Mammary epithelial cell (primary cell): ENCODE measurements at regions of chr2 and their contacts with region 1.

Region 1: GRCh38 chr2:36770542-36771287 is 74.2 kb downstream of the VIT start:
- DNase-seq: peak; percentile 47
- H3K4me3 ChIP-seq: no peak overlapping the region
- H3K27ac ChIP-seq: no peak overlapping the region
- H3K4me1 ChIP-seq: no peaks in the 10 kb centered on the region
- H3K27me3 ChIP-seq: no peaks in the 10 kb centered on the region
- CTCF ChIP-seq: peak; percentile 88 to 93

Region 2: GRCh38 chr2:36530178-36530982 is 240.3 kb before region 1 on chr2:
- CTCF ChIA-PET with region 1: no interaction called
- dilution Hi-C with region 1: no loop called
- in situ Hi-C with region 1: loop called in 1 of 2 experiments (anchors 10 kb)
- intact Hi-C with region 1: no loop called
- DNase-seq: no peak
- H3K4me3 ChIP-seq: no peak overlapping the region
- H3K27ac ChIP-seq: no peak overlapping the region
- H3K4me1 ChIP-seq: no peaks in the 10 kb centered on the region
- H3K27me3 ChIP-seq: no peaks in the 10 kb centered on the region
- CTCF ChIP-seq: no peak

Region 3: DNA sequence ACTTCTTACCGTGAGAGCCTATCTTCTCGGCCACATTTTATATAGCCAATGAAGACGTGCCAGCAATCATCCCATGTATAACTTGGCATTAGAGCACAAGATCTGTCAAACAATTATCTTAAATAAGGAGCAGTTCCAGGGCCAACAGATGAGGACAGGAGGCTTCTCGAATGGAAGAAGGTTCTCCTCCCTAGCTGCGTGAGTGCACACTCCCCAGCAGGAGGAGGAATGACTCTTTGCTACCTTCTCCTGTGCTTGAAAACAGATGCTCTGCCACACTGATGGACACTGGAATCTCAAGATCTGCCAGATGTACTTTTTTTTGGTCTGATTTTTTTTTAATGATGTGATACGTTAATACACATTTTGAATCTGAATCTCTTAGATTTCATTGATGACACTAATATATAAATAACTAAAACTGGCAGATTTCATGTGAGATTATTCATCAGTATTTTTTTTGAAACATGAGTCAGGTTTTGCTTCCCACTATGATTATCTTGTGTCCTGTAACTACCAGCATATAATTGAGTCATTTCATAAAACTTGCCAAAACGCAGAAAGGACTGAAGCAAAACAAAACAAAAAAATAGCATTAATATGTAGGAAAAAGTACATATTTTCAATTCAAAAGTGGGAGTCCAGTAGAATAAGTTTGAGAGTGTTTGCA is 74.8 kb before region 1 on chr2:
- CTCF ChIA-PET with region 1: no interaction called
- dilution Hi-C with region 1: no loop called
- in situ Hi-C with region 1: loop called in 1 of 2 experiments (anchors 5 kb)
- intact Hi-C with region 1: loop called (anchors 2 kb)
- DNase-seq: peak; percentile 51
- H3K4me3 ChIP-seq: peak overlapping the region in 2 of 3 experiments; percentile 16 to 26
- H3K27ac ChIP-seq: peak overlapping the region; percentile 23
- H3K4me1 ChIP-seq: peaks cover 25% of the 10 kb centered on the region
- H3K27me3 ChIP-seq: no peaks in the 10 kb centered on the region
- CTCF ChIP-seq: peak; percentile 22 to 46

Region 4: DNA sequence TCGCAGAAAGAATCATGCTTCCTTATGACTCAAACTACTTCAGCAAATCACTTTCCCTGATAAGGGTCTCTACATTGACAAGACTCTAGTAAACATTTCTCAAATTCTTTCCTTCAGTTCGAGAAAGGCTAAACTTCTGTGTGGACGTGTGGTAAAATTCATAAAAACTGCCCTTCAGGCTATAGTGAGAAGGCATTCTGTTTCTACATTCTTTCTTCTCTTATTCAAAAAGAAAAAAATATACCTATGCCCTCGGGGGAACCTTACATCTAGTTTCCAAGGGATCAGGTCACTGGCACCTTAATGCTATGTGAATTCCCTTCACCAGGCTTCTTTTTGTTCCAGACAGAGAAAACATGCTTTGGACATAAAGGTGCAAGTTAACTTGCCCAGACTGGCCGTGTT is 69.3 kb before region 1 on chr2:
- CTCF ChIA-PET with region 1: no interaction called
- dilution Hi-C with region 1: loop called (anchors 5 kb)
- in situ Hi-C with region 1: loop called in 1 of 2 experiments (anchors 5 kb)
- intact Hi-C with region 1: no loop called
- DNase-seq: peak; percentile 86
- H3K4me3 ChIP-seq: peak overlapping the region in 1 of 3 experiments; percentile 8
- H3K27ac ChIP-seq: peak overlapping the region; percentile 50
- H3K4me1 ChIP-seq: peaks cover 32% of the 10 kb centered on the region
- H3K27me3 ChIP-seq: no peaks in the 10 kb centered on the region
- CTCF ChIP-seq: peak; percentile 60 to 63

Region 5: GRCh38 chr2:36708041-36708741 is 62.5 kb before region 1 on chr2:
- CTCF ChIA-PET with region 1: no interaction called
- dilution Hi-C with region 1: loop called (anchors 5 kb)
- in situ Hi-C with region 1: loop called in 1 of 2 experiments (anchors 5 kb)
- intact Hi-C with region 1: no loop called
- DNase-seq: no peak
- H3K4me3 ChIP-seq: no peak overlapping the region
- H3K27ac ChIP-seq: no peak overlapping the region
- H3K4me1 ChIP-seq: peaks cover 12% of the 10 kb centered on the region
- H3K27me3 ChIP-seq: no peaks in the 10 kb centered on the region
- CTCF ChIP-seq: no peak

Region 6: GRCh38 chr2:36731941-36732648 is 38.6 kb before region 1 on chr2:
- CTCF ChIA-PET with region 1: no interaction called
- dilution Hi-C with region 1: no loop called
- in situ Hi-C with region 1: no loop called
- intact Hi-C with region 1: no loop called
- DNase-seq: no peak
- H3K4me3 ChIP-seq: no peak overlapping the region
- H3K27ac ChIP-seq: no peak overlapping the region
- H3K4me1 ChIP-seq: no peaks in the 10 kb centered on the region
- H3K27me3 ChIP-seq: no peaks in the 10 kb centered on the region
- CTCF ChIP-seq: no peak

Region 7: GRCh38 chr2:37143974-37144373 is 373.3 kb after region 1 on chr2:
- CTCF ChIA-PET with region 1: no interaction called
- dilution Hi-C with region 1: no loop called
- in situ Hi-C with region 1: no loop called
- intact Hi-C with region 1: no loop called
- DNase-seq: no peak
- H3K4me3 ChIP-seq: no peak overlapping the region
- H3K27ac ChIP-seq: no peak overlapping the region
- H3K4me1 ChIP-seq: no peaks in the 10 kb centered on the region
- H3K27me3 ChIP-seq: no peaks in the 10 kb centered on the region
- CTCF ChIP-seq: no peak